Adrenal gland (tissue), 19 donors: ENCODE measurements at regions of chr1 and their contacts with region 1.

Region 1: GRCh38 chr1:46616277-46617107 is at the start of gene MOB3C:
- DNase-seq: peak; percentile 81 to 92 (median 85)
- H3K4me3 ChIP-seq: peak within 1 kb of the TSS; percentile 75 to 88 (median 80)
- H3K27ac ChIP-seq: peak within 1 kb of the TSS; percentile 81 to 96 (median 86)
- H3K4me1 ChIP-seq: peaks cover 34 to 48% of the 10 kb centered on the region in 2 donors
- H3K27me3 ChIP-seq: no peaks in the 10 kb centered on the region
- CTCF ChIP-seq: peak in 1 of 6 experiments; percentile 12
- POLR2A ChIP-seq: peak; percentile 67 to 82
- total RNA-seq, gene MOB3C: 7.5 to 29.9 (median 20.4) TPM

Region 2: GRCh38 chr1:46718727-46719622 is 102.5 kb after region 1 on chr1 and contains the start of gene EFCAB14:
- intact Hi-C with region 1: loop called in 1 of 2 experiments (anchors 10 kb)
- DNase-seq: peak; percentile 96 to 98 (median 97)
- H3K4me3 ChIP-seq: peak within 1 kb of the TSS; percentile 67 to 99 (median 85)
- H3K27ac ChIP-seq: peak within 1 kb of the TSS in 4 of 5 donors; percentile 72 to 91 (median 79)
- H3K4me1 ChIP-seq: peaks cover 18 to 28% of the 10 kb centered on the region in 2 donors
- H3K27me3 ChIP-seq: no peaks in the 10 kb centered on the region
- CTCF ChIP-seq: no peak
- POLR2A ChIP-seq: peak; percentile 65 to 68
- total RNA-seq, gene EFCAB14: 55.7 to 138 (median 79.4) TPM